Activated T-helper 1 cell treated with anti-CD3 and anti-CD28 coated beads, Interleukin-12 subunit alpha, Interleukin-12 subunit beta, Interleukin-2, Interleukin-4 antibody, amounts not matched to agents 30 ng/mL and 10 ng/mL and 1 ng/mL, durations not matched to agents 14 hours and 24 hours and 36 hours (primary cell): ENCODE measurements at regions of chr11 and their contacts with region 1.

Region 1: DNA sequence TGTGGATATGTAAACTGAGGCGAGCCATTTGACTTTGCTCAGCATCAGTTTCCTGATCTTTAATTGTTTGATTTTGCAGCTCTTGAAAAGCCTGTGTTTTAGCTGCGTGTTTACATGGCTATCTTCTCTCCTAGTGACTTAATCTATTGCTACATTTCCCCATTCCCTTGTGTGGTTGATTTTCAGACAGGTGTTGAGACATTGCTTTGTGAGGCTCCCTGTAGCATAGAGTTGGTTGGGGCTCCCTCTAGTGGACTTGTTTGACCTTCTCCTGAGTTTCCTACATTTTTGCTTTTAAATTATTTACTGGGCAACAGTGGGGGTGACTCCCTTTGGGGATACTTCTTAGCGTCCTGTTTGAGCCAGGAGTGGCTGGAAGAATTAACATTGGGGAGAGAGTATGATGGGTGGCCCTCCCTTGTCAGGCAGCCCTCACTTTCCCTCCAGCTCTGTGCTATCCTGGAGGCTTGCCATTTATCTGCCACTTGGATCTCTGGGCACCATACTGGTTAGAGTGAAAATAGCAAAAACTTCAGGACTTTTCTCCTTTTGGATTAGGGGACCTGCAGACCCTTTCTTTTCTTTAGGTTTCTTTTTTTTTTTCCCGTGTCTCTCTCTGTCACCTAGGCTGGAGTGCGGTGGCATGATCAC is 9.2 kb upstream of the CBL start:
- DNase-seq: peak; percentile 60
- H3K4me3 Mint-ChIP-seq: no peak overlapping the region
- H3K27ac Mint-ChIP-seq: no peak overlapping the region
- H3K4me1 Mint-ChIP-seq: peaks cover 9% of the 10 kb centered on the region
- H3K27me3 Mint-ChIP-seq: peaks cover 3% of the 10 kb centered on the region

Region 2: GRCh38 chr11:118907051-118908042 is 289.6 kb before region 1 on chr11:
- intact Hi-C with region 1: loop called (anchors 5 kb)
- DNase-seq: peak; percentile 80
- H3K4me3 Mint-ChIP-seq: no peak overlapping the region
- H3K27ac Mint-ChIP-seq: peak overlapping the region; percentile 40
- H3K4me1 Mint-ChIP-seq: peaks cover 19% of the 10 kb centered on the region
- H3K27me3 Mint-ChIP-seq: no peaks in the 10 kb centered on the region

Region 3: DNA sequence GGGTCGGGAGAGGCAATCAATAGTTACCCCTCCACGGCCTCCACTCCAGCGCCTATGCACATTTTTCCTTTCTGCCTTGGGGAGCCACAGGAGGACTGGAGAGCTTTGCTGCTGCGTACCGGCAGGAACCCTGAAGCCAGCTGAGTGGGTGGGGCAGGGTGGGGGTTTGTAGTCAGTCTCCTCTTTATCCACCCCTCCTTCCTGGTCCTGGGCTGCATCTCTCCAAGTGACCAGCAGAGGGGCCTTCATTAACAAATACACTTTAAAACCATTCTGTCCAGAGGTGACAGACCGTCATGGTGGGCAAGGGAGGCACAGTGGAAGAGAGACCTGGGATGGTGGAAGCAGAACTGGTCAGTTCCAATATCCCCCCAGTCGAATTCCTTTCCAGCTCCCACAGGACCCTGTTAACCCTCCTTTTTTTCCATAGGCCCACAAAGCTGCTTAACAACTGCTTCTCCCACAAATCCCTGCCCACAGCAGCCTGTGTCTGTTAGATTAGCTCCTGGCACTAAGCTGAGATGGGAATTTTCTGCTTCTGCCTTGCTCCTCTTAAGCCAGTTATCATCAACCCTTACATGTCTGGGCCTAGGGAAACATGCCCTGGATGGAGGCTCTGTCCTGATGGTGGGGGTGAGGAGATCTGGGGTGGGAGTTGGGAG is 52.0 kb before region 1 on chr11:
- intact Hi-C with region 1: loop called (anchors 1 kb)
- DNase-seq: no peak
- H3K4me3 Mint-ChIP-seq: no peak overlapping the region
- H3K27ac Mint-ChIP-seq: no peak overlapping the region
- H3K4me1 Mint-ChIP-seq: peaks cover 13% of the 10 kb centered on the region
- H3K27me3 Mint-ChIP-seq: peaks cover 38% of the 10 kb centered on the region

Region 4: DNA sequence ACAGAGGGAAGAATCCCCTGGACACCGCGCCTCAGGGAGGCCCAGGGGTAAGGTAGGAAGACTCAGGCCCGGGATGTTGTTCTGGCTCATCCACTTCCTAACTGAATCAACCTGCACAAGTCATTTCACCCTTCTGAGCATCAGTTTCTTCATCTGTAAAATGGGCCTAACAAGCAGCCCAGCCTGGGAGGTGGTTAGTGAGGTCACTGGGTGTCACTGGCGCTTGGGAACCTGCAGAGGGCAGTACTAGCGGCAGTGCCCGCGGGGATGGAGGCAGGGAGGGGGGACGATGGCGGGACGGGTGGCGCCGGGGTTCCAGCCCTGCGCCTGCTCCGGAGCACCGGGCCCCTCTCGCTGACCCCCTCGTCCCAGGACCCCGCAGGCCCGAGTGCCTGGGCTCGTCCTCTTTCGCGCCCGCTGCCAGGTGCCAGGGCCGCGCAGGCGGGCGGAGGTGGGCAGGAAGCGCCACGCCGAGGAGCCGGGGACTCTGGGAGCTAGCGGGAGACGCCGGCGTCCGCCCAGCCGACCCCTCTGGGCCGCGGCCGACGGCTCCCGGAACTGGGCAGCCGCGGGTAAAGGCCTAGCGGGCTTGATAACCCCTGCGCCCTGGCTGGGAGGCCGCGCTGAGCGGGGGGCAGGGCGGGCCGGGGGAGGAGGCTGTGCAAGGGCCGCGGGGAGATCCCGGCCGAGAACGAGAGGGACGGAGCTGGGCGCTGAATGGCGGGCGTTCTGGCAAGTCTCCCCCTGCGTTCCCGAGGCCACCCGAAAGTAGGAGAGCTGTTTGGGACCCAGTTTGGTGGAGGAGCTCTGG is 28.3 kb before region 1 on chr11 and contains the start of gene NLRX1:
- intact Hi-C with region 1: loop called (anchors 1 kb)
- DNase-seq: peak; percentile 77
- H3K4me3 Mint-ChIP-seq: peak within 1 kb of the TSS; percentile 92
- H3K27ac Mint-ChIP-seq: peak within 1 kb of the TSS; percentile 94
- H3K4me1 Mint-ChIP-seq: peaks cover 24% of the 10 kb centered on the region
- H3K27me3 Mint-ChIP-seq: peaks cover 2% of the 10 kb centered on the region
- total RNA-seq, gene NLRX1: 24.1 and 29.5 TPM in 2 replicates

Region 5: GRCh38 chr11:119284344-119285157 is 87.6 kb after region 1 on chr11:
- intact Hi-C with region 1: loop called (anchors 2 kb)
- DNase-seq: no peak
- H3K4me3 Mint-ChIP-seq: no peak overlapping the region
- H3K27ac Mint-ChIP-seq: no peak overlapping the region
- H3K4me1 Mint-ChIP-seq: peaks cover 27% of the 10 kb centered on the region
- H3K27me3 Mint-ChIP-seq: no peaks in the 10 kb centered on the region

Region 6: GRCh38 chr11:119491753-119492510 is 295.0 kb after region 1 on chr11:
- intact Hi-C with region 1: no loop called
- DNase-seq: no peak
- H3K4me3 Mint-ChIP-seq: no peak overlapping the region
- H3K27ac Mint-ChIP-seq: no peak overlapping the region
- H3K4me1 Mint-ChIP-seq: no peaks in the 10 kb centered on the region
- H3K27me3 Mint-ChIP-seq: peaks cover 2% of the 10 kb centered on the region